Activated T-helper 2 cell treated with anti-CD3 and anti-CD28 coated beads, Interferon-gamma antibody, Interleukin-2, Interleukin-4, amounts not matched to agents 10 μg/mL and 5 μg/mL and 100 μg/mL, durations not matched to agents 14 hours and 24 hours and 36 hours (primary cell): ENCODE measurements at regions of chr17 and their contacts with region 1.

Region 1: DNA sequence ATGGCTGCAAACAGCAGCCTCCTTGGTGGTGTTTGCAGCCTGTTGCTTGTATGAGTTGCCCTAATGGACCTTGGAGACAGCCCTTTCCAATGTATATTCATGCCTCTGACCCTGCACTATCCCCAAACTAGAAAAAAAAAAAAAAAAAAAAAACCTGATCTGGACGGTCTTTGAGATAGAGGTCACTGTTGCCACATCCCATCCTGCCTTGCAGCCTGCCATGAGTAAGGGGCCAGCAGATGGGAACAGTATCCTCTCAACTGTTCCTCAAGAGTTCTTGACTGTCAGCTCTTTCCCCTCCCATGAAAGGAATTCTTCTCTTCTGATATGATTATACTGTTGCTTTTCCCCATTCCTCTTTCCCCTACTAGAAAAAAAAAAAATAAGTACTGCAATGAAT is 152.4 kb downstream of the SSH2 start:
- DNase-seq: no peak
- H3K4me3 Mint-ChIP-seq: no peak overlapping the region
- H3K27ac Mint-ChIP-seq: no peak overlapping the region
- H3K4me1 Mint-ChIP-seq: peaks cover 3% of the 10 kb centered on the region
- H3K27me3 Mint-ChIP-seq: no peaks in the 10 kb centered on the region

Region 2: DNA sequence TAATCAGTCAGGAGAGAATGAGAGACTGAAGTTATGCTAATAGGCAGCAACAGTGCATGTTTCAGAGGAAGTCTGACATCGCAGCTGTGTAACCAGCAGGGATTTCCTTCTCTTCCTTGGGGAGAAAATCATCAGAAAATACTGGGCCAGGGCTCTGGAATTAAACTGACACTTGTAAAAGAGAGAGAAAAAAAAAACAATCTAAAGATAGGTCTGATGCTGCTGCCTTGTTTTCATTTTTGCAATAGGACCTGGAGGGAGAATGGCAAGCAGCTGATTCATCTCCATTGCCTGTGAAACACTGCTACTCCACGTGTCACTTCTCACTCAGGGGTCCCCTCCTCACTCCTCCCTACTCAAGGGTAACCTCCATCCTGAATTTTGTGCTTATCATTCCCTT is 137.2 kb before region 1 on chr17:
- intact Hi-C with region 1: loop called (anchors 1 kb)
- DNase-seq: no peak
- H3K4me3 Mint-ChIP-seq: no peak overlapping the region
- H3K27ac Mint-ChIP-seq: peak overlapping the region; percentile 67
- H3K4me1 Mint-ChIP-seq: peaks cover 21% of the 10 kb centered on the region
- H3K27me3 Mint-ChIP-seq: no peaks in the 10 kb centered on the region

Region 3: DNA sequence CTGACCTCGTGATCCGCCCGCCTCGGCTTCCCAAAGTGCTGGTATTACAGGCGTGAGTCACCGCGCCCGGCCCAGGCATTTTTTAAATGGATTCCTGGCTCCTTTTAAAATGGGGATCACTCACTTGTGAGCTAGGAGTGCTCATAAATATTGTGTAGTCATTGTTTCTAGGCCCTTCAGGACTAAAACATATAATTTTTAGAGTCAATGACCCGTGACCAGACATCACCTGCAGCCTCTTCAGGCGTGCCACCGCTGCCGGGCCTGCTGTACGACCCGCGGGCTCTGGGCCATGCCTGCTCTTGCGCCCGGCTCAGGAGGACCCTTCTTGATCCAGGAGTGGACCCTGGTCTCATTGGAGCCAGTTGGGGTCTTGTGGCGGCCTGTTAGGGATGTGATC is 194.6 kb after region 1 on chr17:
- intact Hi-C with region 1: no loop called
- DNase-seq: no peak
- H3K4me3 Mint-ChIP-seq: no peak overlapping the region
- H3K27ac Mint-ChIP-seq: no peak overlapping the region
- H3K4me1 Mint-ChIP-seq: no peaks in the 10 kb centered on the region
- H3K27me3 Mint-ChIP-seq: peaks cover 18% of the 10 kb centered on the region